ENCODE measurements at regions of chr18 and their contacts with region 1.

Region 1: DNA sequence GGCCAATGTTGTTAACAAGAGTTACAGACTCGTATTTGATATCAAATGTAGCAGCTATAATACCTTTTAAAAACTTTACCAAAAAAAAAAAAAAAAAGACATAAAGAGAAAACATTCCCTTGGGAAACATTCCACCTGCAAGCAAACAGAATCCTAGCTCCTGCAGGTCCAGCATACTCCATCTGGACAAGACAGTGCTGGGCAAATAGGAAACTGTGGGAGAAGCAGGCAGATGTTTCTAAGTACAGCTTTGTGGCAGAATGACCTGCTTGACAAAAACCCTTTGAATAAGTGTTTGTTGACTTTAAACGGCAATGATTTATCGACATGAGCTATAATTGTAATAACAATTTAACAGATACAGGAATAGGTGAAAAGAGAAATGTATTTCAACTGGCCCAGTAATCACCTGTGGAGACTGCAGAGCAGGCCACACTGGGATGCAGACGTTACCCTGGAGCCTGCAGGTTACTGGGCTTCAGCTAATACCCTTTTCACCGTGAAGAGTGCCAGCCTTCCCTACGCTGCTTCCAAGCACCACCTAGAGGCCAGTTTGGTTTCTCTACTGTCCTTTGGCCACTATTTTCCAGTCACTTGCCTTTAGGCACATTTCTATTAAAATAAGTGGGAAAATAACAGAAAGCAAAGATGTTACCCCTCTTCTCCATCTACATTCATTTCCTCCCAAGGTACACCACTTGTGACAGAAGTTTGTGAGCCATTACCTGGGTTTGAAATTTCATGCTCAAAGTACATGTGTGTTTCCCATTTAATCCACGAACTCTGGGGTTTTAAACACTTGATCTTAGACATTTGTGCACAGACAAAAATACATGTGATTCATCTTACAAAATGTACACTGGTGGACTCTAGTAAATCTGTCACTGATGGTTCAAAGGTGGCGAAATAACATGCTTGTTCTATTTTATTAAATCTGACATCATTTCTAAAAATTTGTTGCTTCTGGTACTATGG is 96.9 kb upstream of the ZNF397 start:
- DNase-seq: peak; percentile 48
- ATAC-seq: peak; percentile 92

Region 2: GRCh38 chr18:35005963-35006577 is 137.8 kb before region 1 on chr18:
- intact Hi-C with region 1: loop called (anchors 5 kb)
- DNase-seq: no peak
- ATAC-seq: peak; percentile 89

Region 3: GRCh38 chr18:35040988-35041814 is 102.7 kb before region 1 on chr18 and contains the start of gene MAPRE2:
- intact Hi-C with region 1: loop called (anchors 10 kb)
- DNase-seq: peak; percentile 100
- ATAC-seq: peak; percentile 96
- total RNA-seq, gene MAPRE2: 111 TPM

Region 4: GRCh38 chr18:35459005-35459441 is 315.1 kb after region 1 on chr18:
- intact Hi-C with region 1: no loop called
- DNase-seq: peak; percentile 73
- ATAC-seq: peak; percentile 95

Measured in left ventricle myocardium superior (tissue), 1 donor.